Aorta (tissue), 5 donors: ENCODE measurements at regions of chr3 and their contacts with region 1.

Region 1: DNA sequence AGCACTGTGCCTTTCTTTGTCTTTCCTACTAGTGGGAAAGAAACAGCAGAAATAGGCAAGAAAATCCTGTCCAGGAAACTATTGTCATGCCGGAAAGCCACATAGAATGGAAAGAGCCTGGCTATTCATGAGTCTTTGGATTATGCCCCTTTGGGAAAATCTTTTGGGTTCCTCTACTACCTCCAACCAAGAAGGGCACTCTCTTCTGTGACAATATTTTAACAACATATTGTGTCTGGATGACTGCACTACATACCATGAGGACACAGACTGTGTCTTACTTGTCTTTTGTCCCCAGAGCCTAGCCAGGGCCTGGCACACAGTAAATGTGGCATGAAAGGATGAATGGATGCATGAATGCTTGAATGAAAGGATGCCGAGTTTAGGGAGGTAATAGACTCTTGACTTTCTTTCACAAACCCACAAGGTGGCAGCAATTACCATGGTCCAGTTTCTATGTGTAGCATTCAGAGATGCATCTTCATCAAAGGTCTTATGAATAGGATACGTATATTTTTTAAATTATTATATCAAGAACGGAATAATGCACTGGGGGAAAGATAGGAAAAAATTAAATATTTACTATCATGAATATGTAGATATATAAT is 30.3 kb downstream of the ARL14 start:
- DNase-seq: no peak
- ATAC-seq: peak; percentile 60
- H3K4me3 ChIP-seq: no peak overlapping the region
- H3K27ac ChIP-seq: no peak overlapping the region
- H3K4me1 ChIP-seq: peaks cover 0 to 2% of the 10 kb centered on the region in 2 donors
- H3K27me3 ChIP-seq: peaks cover 0 to 2% of the 10 kb centered on the region in 2 donors

Region 2: DNA sequence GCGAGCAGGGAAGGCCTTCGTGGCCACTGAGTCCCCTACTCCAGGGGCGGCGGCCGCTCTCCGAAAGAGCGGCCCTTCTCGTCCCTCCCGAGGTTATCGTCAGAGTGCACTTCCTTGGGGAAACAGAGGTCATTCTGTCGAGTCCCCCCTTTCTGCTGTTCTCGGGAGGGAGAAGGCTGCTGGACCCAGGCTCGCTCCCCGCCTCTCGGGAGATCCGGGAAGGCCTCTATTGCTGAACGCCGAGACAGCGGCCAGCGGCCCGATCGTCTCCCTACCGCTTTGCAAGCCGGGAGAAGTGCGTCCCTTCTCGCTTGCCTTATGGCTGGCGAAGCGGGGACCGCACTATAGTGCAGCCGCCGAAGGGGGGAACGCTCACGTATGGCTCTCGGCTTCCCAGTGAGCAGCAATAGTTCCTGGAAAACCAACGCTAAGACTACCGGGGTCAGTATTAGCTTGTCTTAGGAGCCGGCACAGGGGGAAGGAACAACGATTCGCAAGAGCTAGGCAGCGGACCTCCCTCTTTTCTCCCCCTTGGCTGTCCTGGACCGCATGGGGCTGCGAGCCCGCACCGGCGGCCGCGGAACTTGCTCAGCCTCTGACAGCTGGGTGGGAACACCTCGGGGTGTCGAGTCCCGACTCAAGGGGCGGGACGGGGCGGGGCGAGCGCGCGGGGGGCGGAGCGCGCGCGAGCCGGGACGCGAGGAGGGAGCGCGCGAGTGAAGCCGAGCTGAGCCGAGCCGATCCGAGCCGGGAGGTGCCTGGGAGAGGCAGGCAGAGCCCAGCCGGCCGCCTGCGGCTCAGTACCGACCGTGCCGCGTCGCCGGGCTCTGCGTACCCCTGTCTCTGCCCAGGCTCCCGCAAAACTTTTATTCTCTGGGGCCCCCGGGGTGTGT is 47.8 kb after region 1 on chr3:
- intact Hi-C with region 1: no loop called
- DNase-seq: peak; percentile 96 to 97
- ATAC-seq: peak; percentile 96
- H3K4me3 ChIP-seq: peak overlapping the region; percentile 65 to 93
- H3K27ac ChIP-seq: peak overlapping the region; percentile 70 to 76
- H3K4me1 ChIP-seq: no peaks in the 10 kb centered on the region
- H3K27me3 ChIP-seq: no peaks in the 10 kb centered on the region

Region 3: DNA sequence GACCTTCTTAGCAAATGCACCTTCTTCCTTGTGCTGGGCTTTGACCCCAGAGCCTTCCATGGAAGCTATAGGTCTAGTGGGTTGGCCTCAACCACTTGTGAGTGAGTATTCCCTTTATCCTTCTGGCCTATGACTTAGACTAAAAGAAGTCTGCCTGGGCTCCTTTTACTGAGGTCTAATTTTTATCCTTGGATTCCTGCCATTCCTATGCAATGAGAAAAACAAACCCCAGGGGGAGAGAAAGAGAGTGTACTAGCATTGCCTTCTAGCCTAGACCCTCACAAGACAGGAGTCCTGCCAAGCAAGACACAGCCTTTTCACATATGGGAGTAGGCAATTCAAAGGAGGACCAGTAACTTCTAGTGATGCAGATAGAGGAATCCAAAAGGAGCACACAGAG is 204.1 kb after region 1 on chr3:
- intact Hi-C with region 1: no loop called
- DNase-seq: no peak
- ATAC-seq: no peak
- H3K4me3 ChIP-seq: no peak overlapping the region
- H3K27ac ChIP-seq: no peak overlapping the region
- H3K4me1 ChIP-seq: no peaks in the 10 kb centered on the region
- H3K27me3 ChIP-seq: no peaks in the 10 kb centered on the region

Region 4: DNA sequence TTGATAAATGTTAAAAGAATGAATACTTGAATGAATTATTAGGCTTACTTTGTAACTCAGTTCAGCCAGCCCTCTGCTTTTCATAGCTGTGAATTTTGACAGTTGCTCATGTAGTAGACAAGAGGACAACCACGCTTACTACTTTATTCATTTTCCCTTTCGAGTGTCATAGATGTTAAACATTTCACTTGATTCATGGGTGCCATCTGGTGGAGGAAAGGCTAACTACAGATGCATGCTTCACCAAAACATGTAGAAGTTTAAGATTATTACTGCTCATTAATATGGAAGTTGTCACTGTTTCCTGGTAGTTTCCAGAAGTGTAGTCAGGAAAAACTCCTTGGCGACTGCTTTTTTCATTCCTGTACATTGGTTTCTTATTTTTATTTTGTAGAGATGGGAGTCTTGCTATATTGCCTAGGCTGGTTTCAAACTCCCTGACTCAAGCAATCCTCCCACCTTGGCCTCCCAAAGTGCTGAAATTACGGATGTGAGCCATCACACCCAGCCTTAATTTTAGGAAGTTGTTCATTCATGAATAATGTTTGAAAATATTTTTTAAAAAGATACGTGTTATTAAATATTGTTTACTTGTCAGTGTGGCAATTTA is 234.7 kb after region 1 on chr3:
- intact Hi-C with region 1: loop called (anchors 2 kb)
- DNase-seq: peak in 1 of 2 donors; percentile 57
- ATAC-seq: peak; percentile 83
- H3K4me3 ChIP-seq: no peak overlapping the region
- H3K27ac ChIP-seq: no peak overlapping the region
- H3K4me1 ChIP-seq: no peaks in the 10 kb centered on the region
- H3K27me3 ChIP-seq: no peaks in the 10 kb centered on the region

Region 5: GRCh38 chr3:161423911-161424522 is 716.7 kb after region 1 on chr3:
- intact Hi-C with region 1: loop called (anchors 10 kb)
- DNase-seq: no peak
- ATAC-seq: no peak
- H3K4me3 ChIP-seq: no peak overlapping the region
- H3K27ac ChIP-seq: no peak overlapping the region
- H3K4me1 ChIP-seq: no peaks in the 10 kb centered on the region
- H3K27me3 ChIP-seq: no peaks in the 10 kb centered on the region